Posterior cingulate gyrus (tissue), 11 donors: ENCODE measurements at regions of chr15 and their contacts with region 1.

Region 1: DNA sequence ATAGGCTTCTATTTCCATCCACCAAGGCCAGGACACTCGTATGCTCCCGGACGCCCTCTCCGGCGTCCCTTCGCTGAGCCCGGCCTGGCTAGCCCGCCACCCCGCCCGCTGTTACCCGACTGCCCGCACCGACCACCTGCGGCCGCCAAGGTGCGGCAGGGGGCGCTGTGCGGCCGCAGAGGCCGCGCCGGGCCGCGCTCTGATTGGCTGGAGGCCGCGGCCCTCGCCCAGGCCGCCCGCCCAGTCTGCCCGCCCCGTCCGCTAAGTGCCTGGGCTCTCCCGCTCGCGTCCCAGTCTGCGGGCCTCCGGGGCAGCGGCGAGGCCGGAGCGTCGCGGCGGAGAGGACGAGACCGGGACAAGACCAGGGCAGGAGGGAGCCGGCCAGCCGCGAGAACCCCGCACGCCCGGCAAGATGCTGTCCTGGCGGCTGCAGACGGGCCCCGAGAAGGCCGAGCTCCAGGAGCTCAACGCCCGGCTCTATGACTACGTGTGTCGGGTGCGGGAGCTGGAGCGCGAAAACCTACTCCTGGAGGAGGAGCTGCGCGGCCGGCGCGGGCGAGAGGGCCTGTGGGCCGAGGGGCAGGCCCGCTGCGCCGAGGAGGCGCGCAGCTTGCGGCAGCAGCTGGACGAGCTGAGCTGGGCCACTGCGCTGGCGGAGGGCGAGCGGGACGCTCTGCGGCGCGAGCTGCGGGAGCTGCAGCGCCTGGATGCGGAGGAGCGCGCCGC is at the start of gene SYNM:
- DNase-seq: peak; percentile 59 to 97 (median 70)

Region 2: DNA sequence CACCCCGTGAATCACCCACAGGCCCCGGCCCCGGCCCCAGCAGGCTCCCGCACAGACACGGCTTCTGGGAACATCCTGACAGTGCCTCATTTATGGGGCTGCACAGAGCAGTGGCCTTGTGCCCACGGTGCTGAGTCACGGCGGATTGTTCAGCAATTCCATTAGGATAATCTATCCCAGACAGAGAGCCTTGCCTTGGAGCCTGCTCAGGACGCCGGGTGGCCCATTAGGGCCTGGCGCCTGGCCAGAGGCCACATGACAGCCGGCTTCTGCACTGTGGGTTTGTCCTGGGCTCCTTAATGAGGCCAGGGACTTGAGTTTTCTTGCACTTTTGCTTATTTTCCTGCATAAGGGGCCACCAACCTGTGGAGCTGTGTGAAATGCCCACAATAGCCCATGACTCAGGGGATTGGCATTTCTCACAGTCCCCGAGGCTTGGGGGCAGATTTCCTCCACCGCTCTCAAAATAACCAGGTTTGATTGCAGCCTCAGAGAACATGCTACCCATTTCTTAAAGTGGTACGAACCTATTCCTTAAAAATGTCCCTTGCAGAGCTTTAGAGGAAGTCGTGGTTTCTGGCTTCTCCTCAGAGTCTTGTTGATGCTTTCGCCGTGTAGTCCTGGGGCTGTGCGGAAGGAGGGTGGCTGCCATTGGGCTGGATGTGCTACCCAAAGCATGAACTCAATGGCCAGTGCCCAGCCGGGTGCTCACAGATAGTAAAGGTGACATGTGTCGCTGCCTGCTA is 18.9 kb after region 1 on chr15:
- intact Hi-C with region 1: loop called (anchors 2 kb)
- DNase-seq: peak; percentile 72 to 98 (median 86)

Region 3: GRCh38 chr15:99213187-99213811 is 108.3 kb after region 1 on chr15:
- intact Hi-C with region 1: loop called (anchors 1 kb)
- DNase-seq: peak; percentile 69 to 97 (median 85)

Region 4: GRCh38 chr15:99305761-99306505 is 201.0 kb after region 1 on chr15:
- intact Hi-C with region 1: no loop called
- DNase-seq: no peak